ENCODE measurements at regions of chr7 and their contacts with region 1.

Region 1: GRCh38 chr7:115217373-115217772 is 295.5 kb downstream of the MDFIC start:
- DNase-seq: peak in 1 of 9 experiments; percentile 17
- ATAC-seq: no peak
- H3K4me3 ChIP-seq: no peak overlapping the region
- H3K4me3 Mint-ChIP-seq: no peak overlapping the region
- H3K27ac ChIP-seq: no peak overlapping the region
- H3K27ac Mint-ChIP-seq: no peak overlapping the region
- H3K4me1 ChIP-seq: no peaks in the 10 kb centered on the region
- H3K4me1 Mint-ChIP-seq: peaks cover 4% of the 10 kb centered on the region
- H3K27me3 ChIP-seq: no peaks in the 10 kb centered on the region
- H3K27me3 Mint-ChIP-seq: no peaks in the 10 kb centered on the region
- CTCF ChIP-seq: peak; percentile 27

Region 2: GRCh38 chr7:114033475-114033874 is 1183.9 kb before region 1 on chr7:
- CTCF ChIA-PET with region 1: no interaction called
- POLR2A ChIA-PET with region 1: no interaction called
- intact Hi-C with region 1: loop called in 1 of 2 experiments (anchors 5 kb)
- DNase-seq: no peak
- ATAC-seq: no peak
- H3K4me3 ChIP-seq: no peak overlapping the region
- H3K4me3 Mint-ChIP-seq: no peak overlapping the region
- H3K27ac ChIP-seq: no peak overlapping the region
- H3K27ac Mint-ChIP-seq: no peak overlapping the region
- H3K4me1 ChIP-seq: no peaks in the 10 kb centered on the region
- H3K4me1 Mint-ChIP-seq: no peaks in the 10 kb centered on the region
- H3K27me3 ChIP-seq: no peaks in the 10 kb centered on the region
- H3K27me3 Mint-ChIP-seq: no peaks in the 10 kb centered on the region
- CTCF ChIP-seq: no peak

Measured in CD8-positive, alpha-beta T cell (primary cell).